CD4-positive, alpha-beta memory T cell (primary cell): ENCODE measurements at regions of chr17 and their contacts with region 1.

Region 1: DNA sequence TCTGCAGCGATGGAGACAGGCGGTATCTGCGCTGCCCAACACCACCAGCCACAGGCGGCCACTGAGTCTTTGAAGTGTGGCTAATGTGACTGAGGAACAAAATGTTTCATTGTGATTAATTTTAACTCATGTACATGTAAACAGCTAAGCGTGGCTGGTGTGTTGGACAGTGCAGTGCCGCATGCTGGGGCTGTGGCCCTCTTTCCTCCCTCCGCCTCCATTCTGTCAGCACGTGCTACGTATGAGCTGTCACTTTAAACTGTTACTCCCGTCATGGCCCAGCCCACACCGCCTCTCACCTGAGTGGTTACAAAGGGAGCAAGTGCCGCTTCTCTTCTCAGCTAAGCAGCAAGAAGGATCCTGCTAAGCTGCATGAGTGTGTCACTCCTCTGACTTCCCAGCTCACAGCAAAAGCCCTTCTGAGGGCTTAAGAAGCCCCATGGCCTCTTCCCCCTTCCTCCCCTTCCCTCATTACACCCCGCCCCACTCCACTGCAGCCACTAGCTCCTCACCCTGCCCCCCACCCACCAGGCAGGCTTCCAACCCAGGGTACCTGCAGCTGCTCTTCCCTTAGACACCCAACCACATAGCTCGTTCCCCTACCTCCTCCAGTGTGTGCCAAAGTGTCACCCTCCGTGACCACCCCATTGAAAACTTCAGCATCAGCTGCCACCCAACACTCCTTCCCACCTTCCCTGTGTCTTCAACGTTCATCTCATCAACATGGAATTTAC is 15.0 kb downstream of the HASPIN start:
- DNase-seq: peak; percentile 45 to 71 (median 52)
- H3K4me3 ChIP-seq: no peak overlapping the region
- H3K4me3 Mint-ChIP-seq: peak overlapping the region; percentile 21 to 70 (median 58)
- H3K27ac ChIP-seq: no peak overlapping the region
- H3K27ac Mint-ChIP-seq: peak overlapping the region; percentile 67 to 88 (median 81)
- H3K4me1 ChIP-seq: peaks cover 39% of the 10 kb centered on the region
- H3K4me1 Mint-ChIP-seq: peaks cover 21 to 39% (median 30%) of the 10 kb centered on the region in 4 donors
- H3K27me3 ChIP-seq: no peaks in the 10 kb centered on the region
- H3K27me3 Mint-ChIP-seq: no peaks in the 10 kb centered on the region

Region 2: GRCh38 chr17:3723556-3724369 is 15.0 kb before region 1 on chr17 and contains the start of gene HASPIN:
- CTCF ChIA-PET with region 1: interaction called, 27 read pairs
- POLR2A ChIA-PET with region 1: interaction called, 3 read pairs
- intact Hi-C with region 1: no loop called
- DNase-seq: peak; percentile 88 to 92 (median 91)
- H3K4me3 ChIP-seq: peak within 1 kb of the TSS; percentile 59 to 95
- H3K4me3 Mint-ChIP-seq: peak within 1 kb of the TSS; percentile 86 to 95 (median 94)
- H3K27ac ChIP-seq: peak within 1 kb of the TSS; percentile 74
- H3K27ac Mint-ChIP-seq: peak within 1 kb of the TSS; percentile 75 to 95 (median 93)
- H3K4me1 ChIP-seq: peaks cover 36% of the 10 kb centered on the region
- H3K4me1 Mint-ChIP-seq: peaks cover 15 to 44% (median 28%) of the 10 kb centered on the region in 4 donors
- H3K27me3 ChIP-seq: no peaks in the 10 kb centered on the region
- H3K27me3 Mint-ChIP-seq: no peaks in the 10 kb centered on the region
- total RNA-seq, gene HASPIN: 0.28 to 0.41 TPM

Region 3: GRCh38 chr17:3770466-3770865 is 31.7 kb after region 1 on chr17:
- CTCF ChIA-PET with region 1: interaction called, 28 read pairs
- POLR2A ChIA-PET with region 1: interaction called, 3 read pairs
- intact Hi-C with region 1: no loop called
- DNase-seq: no peak
- H3K4me3 ChIP-seq: no peak overlapping the region
- H3K4me3 Mint-ChIP-seq: no peak overlapping the region
- H3K27ac ChIP-seq: no peak overlapping the region
- H3K27ac Mint-ChIP-seq: peak overlapping the region in 2 of 7 donors; percentile 55 to 60
- H3K4me1 ChIP-seq: peaks cover 35% of the 10 kb centered on the region
- H3K4me1 Mint-ChIP-seq: peaks cover 22 to 39% (median 30%) of the 10 kb centered on the region in 4 donors
- H3K27me3 ChIP-seq: no peaks in the 10 kb centered on the region
- H3K27me3 Mint-ChIP-seq: no peaks in the 10 kb centered on the region

Region 4: GRCh38 chr17:3827124-3827773 is 88.5 kb after region 1 on chr17:
- CTCF ChIA-PET with region 1: interaction called, 333 read pairs
- POLR2A ChIA-PET with region 1: interaction called, 41 read pairs
- intact Hi-C with region 1: loop called (anchors 1 kb)
- DNase-seq: peak; percentile 67 to 79 (median 74)
- H3K4me3 ChIP-seq: no peak overlapping the region
- H3K4me3 Mint-ChIP-seq: no peak overlapping the region
- H3K27ac ChIP-seq: no peak overlapping the region
- H3K27ac Mint-ChIP-seq: peak overlapping the region in 3 of 7 donors; percentile 42 to 74 (median 70)
- H3K4me1 ChIP-seq: no peaks in the 10 kb centered on the region
- H3K4me1 Mint-ChIP-seq: peaks cover 1 to 5% (median 4%) of the 10 kb centered on the region in 4 donors
- H3K27me3 ChIP-seq: no peaks in the 10 kb centered on the region
- H3K27me3 Mint-ChIP-seq: no peaks in the 10 kb centered on the region

Region 5: DNA sequence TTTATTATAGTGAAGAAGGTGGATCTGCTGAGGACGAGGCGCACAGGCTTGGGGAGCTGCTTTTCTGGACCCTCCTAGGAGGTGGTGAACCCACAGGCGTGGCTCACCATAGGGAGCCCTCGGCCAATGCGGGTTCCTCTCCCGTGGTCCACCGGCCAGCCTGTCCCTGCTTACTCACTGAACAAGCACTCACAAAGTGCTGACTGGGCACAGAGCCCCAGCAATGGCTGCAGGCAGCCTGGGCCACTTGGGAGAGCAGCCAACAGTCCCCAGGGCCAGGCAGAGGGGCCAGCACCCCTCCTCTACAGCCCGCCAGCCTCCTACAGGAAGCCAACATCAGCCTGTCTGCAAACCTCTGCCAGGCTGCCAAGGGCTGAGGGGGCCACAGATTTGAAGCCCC is 126.4 kb after region 1 on chr17:
- CTCF ChIA-PET with region 1: interaction called, 13 read pairs
- POLR2A ChIA-PET with region 1: no interaction called
- intact Hi-C with region 1: no loop called
- DNase-seq: no peak
- H3K4me3 ChIP-seq: no peak overlapping the region
- H3K4me3 Mint-ChIP-seq: no peak overlapping the region
- H3K27ac ChIP-seq: no peak overlapping the region
- H3K27ac Mint-ChIP-seq: no peak overlapping the region
- H3K4me1 ChIP-seq: no peaks in the 10 kb centered on the region
- H3K4me1 Mint-ChIP-seq: no peaks in the 10 kb centered on the region
- H3K27me3 ChIP-seq: no peaks in the 10 kb centered on the region
- H3K27me3 Mint-ChIP-seq: no peaks in the 10 kb centered on the region

Region 6: GRCh38 chr17:3877220-3877619 is 138.5 kb after region 1 on chr17:
- CTCF ChIA-PET with region 1: no interaction called
- POLR2A ChIA-PET with region 1: no interaction called
- intact Hi-C with region 1: no loop called
- DNase-seq: no peak
- H3K4me3 ChIP-seq: no peak overlapping the region
- H3K4me3 Mint-ChIP-seq: no peak overlapping the region
- H3K27ac ChIP-seq: no peak overlapping the region
- H3K27ac Mint-ChIP-seq: no peak overlapping the region
- H3K4me1 ChIP-seq: no peaks in the 10 kb centered on the region
- H3K4me1 Mint-ChIP-seq: no peaks in the 10 kb centered on the region
- H3K27me3 ChIP-seq: no peaks in the 10 kb centered on the region
- H3K27me3 Mint-ChIP-seq: no peaks in the 10 kb centered on the region